Heart left ventricle (tissue), 16 donors: ENCODE measurements at regions of chr9 and their contacts with region 1.

Region 1: GRCh38 chr9:123338710-123339665 is 17.0 kb upstream of the CRB2 start:
- DNase-seq: peak in 4 of 5 donors; percentile 31 to 74 (median 43)
- ATAC-seq: peak; percentile 59 to 82 (median 75)
- H3K4me3 ChIP-seq: peak overlapping the region in 11 of 12 donors; percentile 33 to 55 (median 46)
- H3K27ac ChIP-seq: peak overlapping the region; percentile 25 to 93 (median 80)
- H3K4me1 ChIP-seq: peaks cover 0 to 32% (median 12%) of the 10 kb centered on the region in 12 donors
- H3K27me3 ChIP-seq: no peaks in the 10 kb centered on the region
- CTCF ChIP-seq: no peak
- POLR2A ChIP-seq: no peak

Region 2: DNA sequence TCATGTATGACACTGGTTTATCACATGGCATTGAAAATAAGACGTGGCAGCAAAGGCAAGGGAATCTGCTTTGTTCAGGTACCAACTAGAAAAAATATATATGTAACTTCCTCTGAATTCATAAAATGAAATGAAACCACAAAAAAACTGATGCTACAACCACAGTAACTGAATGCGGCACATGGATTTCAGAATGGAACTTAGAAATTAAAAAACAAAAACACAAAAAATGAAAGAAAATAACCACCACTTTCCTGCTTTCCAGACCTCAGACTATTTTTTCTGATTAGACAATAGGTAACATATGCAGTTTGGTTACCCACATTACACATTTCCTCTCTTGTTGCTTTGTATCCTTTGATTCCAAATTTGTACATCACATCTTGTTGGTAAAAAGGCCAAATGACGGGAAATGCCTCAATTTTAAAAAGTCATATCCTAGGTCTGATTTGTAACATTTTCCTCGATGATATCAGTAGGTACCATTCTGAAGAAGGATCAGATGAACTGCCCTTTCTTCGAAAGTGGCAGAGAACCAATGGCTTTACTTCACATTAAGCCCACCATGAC is 492.5 kb before region 1 on chr9:
- intact Hi-C with region 1: no loop called
- DNase-seq: no peak
- ATAC-seq: no peak
- H3K4me3 ChIP-seq: no peak overlapping the region
- H3K27ac ChIP-seq: no peak overlapping the region
- H3K4me1 ChIP-seq: no peaks in the 10 kb centered on the region
- H3K27me3 ChIP-seq: no peaks in the 10 kb centered on the region
- CTCF ChIP-seq: no peak
- POLR2A ChIP-seq: no peak

Region 3: GRCh38 chr9:123112015-123112975 is 226.7 kb before region 1 on chr9:
- intact Hi-C with region 1: loop called in 2 of 10 experiments (anchors 5 to 10 kb)
- DNase-seq: peak in 2 of 5 donors; percentile 45 to 68
- ATAC-seq: peak; percentile 21 to 67 (median 47)
- H3K4me3 ChIP-seq: no peak overlapping the region
- H3K27ac ChIP-seq: peak overlapping the region in 6 of 12 donors; percentile 17 to 58 (median 40)
- H3K4me1 ChIP-seq: peaks cover 0 to 27% (median 12%) of the 10 kb centered on the region in 12 donors
- H3K27me3 ChIP-seq: no peaks in the 10 kb centered on the region
- CTCF ChIP-seq: no peak
- POLR2A ChIP-seq: no peak

Region 4: DNA sequence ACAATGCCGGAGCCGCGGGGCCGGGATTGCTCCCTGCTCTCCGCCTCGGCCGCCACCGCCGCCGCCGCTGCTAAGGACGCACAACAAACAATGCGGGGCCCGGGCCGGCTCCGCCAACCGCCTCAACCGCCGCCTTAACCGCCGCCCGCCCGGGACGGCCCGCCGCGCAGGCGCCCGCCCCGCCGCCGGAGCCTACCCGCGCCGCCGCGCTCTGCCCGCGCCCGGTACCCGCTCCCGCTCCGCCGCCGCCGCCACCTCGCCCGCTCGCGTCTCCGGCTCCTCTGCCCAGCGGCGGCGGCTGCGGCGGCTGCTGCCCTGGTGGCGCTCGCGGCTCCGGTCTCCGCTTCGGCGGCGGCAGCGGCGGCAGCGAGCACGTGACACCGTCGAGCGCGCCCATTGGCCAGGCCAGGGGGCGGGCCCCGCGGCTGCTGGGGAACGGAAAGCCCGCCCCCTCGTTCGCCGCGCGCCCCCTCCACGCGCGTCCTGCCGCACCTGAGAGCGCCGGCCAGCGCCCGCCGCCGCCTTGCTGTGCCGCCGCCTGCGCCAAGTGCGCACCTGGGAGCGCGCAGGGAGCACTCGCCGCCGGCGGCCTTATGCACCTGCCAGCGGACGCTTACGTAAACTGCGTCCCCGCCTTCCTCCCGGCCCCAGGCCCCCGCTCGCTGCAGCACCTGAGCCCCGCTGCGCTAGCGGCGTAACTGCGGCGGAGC is 70.6 kb before region 1 on chr9 and contains the start of gene STRBP:
- intact Hi-C with region 1: loop called in 4 of 10 experiments (anchors 5 to 10 kb)
- DNase-seq: peak; percentile 92 to 95 (median 93)
- ATAC-seq: peak; percentile 94 to 98 (median 97)
- H3K4me3 ChIP-seq: peak within 1 kb of the TSS; percentile 64 to 97 (median 86)
- H3K27ac ChIP-seq: peak within 1 kb of the TSS in 11 of 12 donors; percentile 67 to 84 (median 74)
- H3K4me1 ChIP-seq: peaks cover 0 to 22% (median 5%) of the 10 kb centered on the region in 12 donors
- H3K27me3 ChIP-seq: no peaks in the 10 kb centered on the region
- CTCF ChIP-seq: peak in 2 of 12 donors; percentile 5 to 15
- POLR2A ChIP-seq: peak in 1 of 2 donors; percentile 55
- total RNA-seq, gene STRBP: 8.3 to 24.4 (median 18.7) TPM

Region 5: GRCh38 chr9:123282362-123283047 is 56.5 kb before region 1 on chr9:
- intact Hi-C with region 1: loop called in 2 of 10 experiments (anchors 5 kb)
- DNase-seq: peak; percentile 43 to 91 (median 79)
- ATAC-seq: peak; percentile 96 to 98 (median 97)
- H3K4me3 ChIP-seq: no peak overlapping the region
- H3K27ac ChIP-seq: peak overlapping the region in 11 of 12 donors; percentile 43 to 89 (median 73)
- H3K4me1 ChIP-seq: peaks cover 0 to 12% (median 0%) of the 10 kb centered on the region in 12 donors
- H3K27me3 ChIP-seq: no peaks in the 10 kb centered on the region
- CTCF ChIP-seq: no peak
- POLR2A ChIP-seq: no peak

Region 6: GRCh38 chr9:123349691-123350480 is 10.9 kb after region 1 on chr9:
- intact Hi-C with region 1: no loop called
- DNase-seq: peak in 2 of 5 donors; percentile 47
- ATAC-seq: peak; percentile 59 to 84 (median 76)
- H3K4me3 ChIP-seq: no peak overlapping the region
- H3K27ac ChIP-seq: no peak overlapping the region
- H3K4me1 ChIP-seq: peaks cover 0 to 14% (median 3%) of the 10 kb centered on the region in 12 donors
- H3K27me3 ChIP-seq: peaks cover 0 to 28% (median 4%) of the 10 kb centered on the region in 9 donors
- CTCF ChIP-seq: peak; percentile 82 to 98 (median 94)
- POLR2A ChIP-seq: no peak